Vagina (tissue), 2 donors: ENCODE measurements at regions of chr1 and their contacts with region 1.

Region 1: GRCh38 chr1:118206966-118207365 is 21.9 kb upstream of the SPAG17 start:
- DNase-seq: no peak
- H3K4me3 ChIP-seq: no peak overlapping the region
- H3K27ac ChIP-seq: no peak overlapping the region
- H3K4me1 ChIP-seq: peaks cover 5% of the 10 kb centered on the region
- H3K27me3 ChIP-seq: no peaks in the 10 kb centered on the region
- CTCF ChIP-seq: no peak
- POLR2A ChIP-seq: no peak

Region 2: DNA sequence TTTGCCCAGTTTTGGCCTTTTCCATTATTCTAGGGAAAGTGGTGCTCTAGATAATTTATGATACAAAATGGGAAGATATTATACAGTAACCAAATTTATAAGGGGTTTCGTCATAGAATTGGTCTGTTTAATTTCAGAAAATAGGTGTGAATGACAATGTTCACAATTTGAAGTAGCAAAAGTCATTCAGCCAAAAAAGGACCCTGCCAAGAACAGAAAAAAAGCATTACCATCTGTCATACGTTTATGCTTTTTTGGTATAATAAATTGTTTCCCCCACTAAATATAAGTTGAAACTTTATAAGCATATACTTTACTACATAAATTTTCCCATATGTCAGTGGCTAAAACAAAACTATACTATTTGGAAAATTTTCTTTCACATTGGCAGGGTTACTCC is 17.4 kb before region 1 on chr1:
- intact Hi-C with region 1: loop called (anchors 1 kb)
- DNase-seq: no peak
- H3K4me3 ChIP-seq: no peak overlapping the region
- H3K27ac ChIP-seq: no peak overlapping the region
- H3K4me1 ChIP-seq: peaks cover 7% of the 10 kb centered on the region
- H3K27me3 ChIP-seq: no peaks in the 10 kb centered on the region
- CTCF ChIP-seq: no peak
- POLR2A ChIP-seq: no peak

Region 3: GRCh38 chr1:118635955-118636354 is 429.0 kb after region 1 on chr1:
- intact Hi-C with region 1: no loop called
- DNase-seq: no peak
- H3K4me3 ChIP-seq: no peak overlapping the region
- H3K27ac ChIP-seq: no peak overlapping the region
- H3K4me1 ChIP-seq: no peaks in the 10 kb centered on the region
- H3K27me3 ChIP-seq: no peaks in the 10 kb centered on the region
- CTCF ChIP-seq: no peak
- POLR2A ChIP-seq: no peak